ENCODE measurements at regions of chr3 and their contacts with region 1.

Region 1: GRCh38 chr3:183697610-183698317 is at the start of gene YEATS2:
- DNase-seq: no peak
- ATAC-seq: peak; percentile 95
- H3K4me3 ChIP-seq: peak within 1 kb of the TSS; percentile 78 to 87
- H3K27ac ChIP-seq: peak within 1 kb of the TSS; percentile 81
- H3K4me1 ChIP-seq: peaks cover 12% of the 10 kb centered on the region
- H3K27me3 ChIP-seq: no peaks in the 10 kb centered on the region
- CTCF ChIP-seq: no peak
- total RNA-seq, gene YEATS2: 33.8 TPM

Region 2: DNA sequence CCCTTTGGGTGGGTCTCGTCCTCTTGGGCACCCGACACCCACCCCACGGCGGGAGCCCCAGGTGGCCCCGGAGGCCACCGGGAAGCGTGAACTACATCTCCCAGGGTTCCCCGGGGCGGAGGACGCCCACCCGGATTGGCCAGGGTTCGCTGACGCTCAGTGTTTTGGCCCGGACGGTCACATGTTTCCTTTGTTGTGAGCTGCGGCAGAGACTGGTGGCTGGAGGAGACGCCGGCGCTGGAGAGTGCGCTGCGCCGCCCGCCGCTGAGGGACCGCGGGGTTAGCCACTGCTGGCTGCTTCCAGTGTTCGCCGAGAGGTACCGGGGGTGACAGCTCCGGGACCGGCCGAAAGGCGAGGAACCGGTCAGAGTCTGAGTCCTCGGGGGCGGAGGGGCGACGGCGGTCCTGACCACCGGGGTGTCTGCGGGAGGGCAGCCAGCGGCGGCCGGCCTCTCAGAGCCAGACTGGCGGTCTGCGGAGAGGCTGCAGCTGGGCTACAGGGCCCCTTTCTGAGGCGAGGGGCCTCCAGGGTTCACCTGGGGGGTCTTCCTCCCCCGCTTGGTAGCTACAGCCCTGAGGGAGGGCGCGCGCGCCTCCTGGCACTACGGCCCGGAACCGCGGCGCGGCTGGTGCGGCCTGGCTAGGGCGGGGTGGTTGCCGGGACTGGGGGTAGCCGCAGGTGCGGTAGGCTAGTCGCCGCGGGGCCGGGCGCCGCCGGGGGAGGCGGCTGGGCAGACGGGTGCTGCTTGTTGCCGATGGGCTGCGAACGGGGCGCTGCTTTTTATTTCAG is 62.1 kb before region 1 on chr3 and contains the start of gene KLHL24:
- CTCF ChIA-PET with region 1: no interaction called
- POLR2A ChIA-PET with region 1: no interaction called
- in situ Hi-C with region 1: no loop called
- intact Hi-C with region 1: loop called (anchors 5 kb)
- DNase-seq: peak; percentile 75
- ATAC-seq: peak; percentile 92
- H3K4me3 ChIP-seq: peak within 1 kb of the TSS; percentile 74 to 87
- H3K27ac ChIP-seq: peak within 1 kb of the TSS; percentile 82
- H3K4me1 ChIP-seq: peaks cover 16% of the 10 kb centered on the region
- H3K27me3 ChIP-seq: no peaks in the 10 kb centered on the region
- CTCF ChIP-seq: no peak
- total RNA-seq, gene KLHL24: 42.0 TPM

Region 3: GRCh38 chr3:183664913-183665381 is 32.8 kb before region 1 on chr3:
- CTCF ChIA-PET with region 1: no interaction called
- POLR2A ChIA-PET with region 1: interaction called, 13 read pairs
- in situ Hi-C with region 1: no loop called
- intact Hi-C with region 1: no loop called
- DNase-seq: peak; percentile 41
- ATAC-seq: peak; percentile 86
- H3K4me3 ChIP-seq: no peak overlapping the region
- H3K27ac ChIP-seq: no peak overlapping the region
- H3K4me1 ChIP-seq: peaks cover 6% of the 10 kb centered on the region; the same call in 1 of the 2 replicates
- H3K27me3 ChIP-seq: no peaks in the 10 kb centered on the region
- CTCF ChIP-seq: no peak

Region 4: DNA sequence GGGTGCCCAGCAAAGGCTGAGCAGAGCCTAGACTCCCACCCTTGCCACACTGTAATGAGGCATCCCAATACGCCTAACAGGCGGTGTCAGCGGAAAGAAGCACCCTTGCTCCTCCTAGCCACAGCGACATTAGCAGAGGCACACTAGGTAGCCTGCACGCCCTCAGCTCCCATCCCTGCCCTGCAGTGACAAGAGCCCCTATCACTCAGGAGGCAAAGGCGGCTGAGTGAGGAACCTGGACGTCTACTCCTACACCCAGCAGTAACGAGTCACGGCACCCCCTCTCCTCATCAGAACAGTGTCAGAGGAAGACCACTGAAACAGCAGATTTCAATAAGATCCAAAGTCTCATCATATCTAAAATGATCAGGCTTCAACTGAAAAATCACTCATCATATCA is 139.6 kb after region 1 on chr3:
- CTCF ChIA-PET with region 1: interaction called, 13 read pairs
- POLR2A ChIA-PET with region 1: no interaction called
- in situ Hi-C with region 1: no loop called
- intact Hi-C with region 1: no loop called
- DNase-seq: no peak
- ATAC-seq: no peak
- H3K4me3 ChIP-seq: no peak overlapping the region
- H3K27ac ChIP-seq: no peak overlapping the region
- H3K4me1 ChIP-seq: no peaks in the 10 kb centered on the region
- H3K27me3 ChIP-seq: no peaks in the 10 kb centered on the region
- CTCF ChIP-seq: no peak